CD4-positive, alpha-beta memory T cell (primary cell): ENCODE measurements at regions of chr19 and their contacts with region 1.

Region 1: DNA sequence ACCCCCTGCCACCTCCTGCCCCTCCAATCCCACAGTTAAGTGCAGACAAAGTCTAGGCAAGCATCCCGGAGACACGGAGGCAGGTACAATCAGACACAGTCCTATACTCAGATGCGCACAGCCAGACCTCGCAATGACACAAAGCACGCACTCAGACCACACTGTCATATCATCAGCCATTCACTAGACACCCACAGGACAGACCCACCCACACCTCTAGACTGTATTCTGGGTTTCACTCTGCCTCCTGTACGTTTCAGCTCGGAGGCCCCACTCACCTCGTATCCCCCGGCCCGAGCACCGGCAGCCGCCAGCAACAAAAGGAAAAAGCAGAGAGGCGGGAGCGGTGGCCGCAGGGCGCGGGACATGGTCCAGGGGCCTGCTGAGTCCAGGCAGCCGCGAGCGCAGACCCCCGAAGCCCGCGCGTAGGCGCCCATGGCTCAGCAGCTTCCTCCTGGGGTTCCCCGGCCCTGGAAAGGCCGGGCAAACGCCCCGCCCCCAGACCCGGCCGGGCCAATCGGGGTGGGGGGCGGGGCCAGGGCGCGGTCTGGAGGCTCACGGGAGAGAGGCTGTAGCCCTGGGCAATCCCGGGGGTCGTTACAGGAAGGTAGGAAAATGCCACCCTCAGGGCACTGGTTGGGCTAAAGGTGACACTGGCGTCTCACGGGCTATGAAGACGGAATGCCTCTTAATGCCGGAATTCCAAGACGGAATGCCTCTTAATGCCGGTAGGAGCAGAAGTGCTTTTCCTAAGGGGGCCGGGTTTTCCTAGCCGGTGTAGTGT is at the starts of genes MAN2B1 and WDR83:
- DNase-seq: peak; percentile 73 to 81 (median 78)
- H3K4me3 ChIP-seq: peak within 1 kb of the TSS; percentile 65 to 91
- H3K4me3 Mint-ChIP-seq: peak within 1 kb of the TSS; percentile 91 to 99 (median 94)
- H3K27ac ChIP-seq: peak within 1 kb of the TSS; percentile 98
- H3K27ac Mint-ChIP-seq: peak within 1 kb of the TSS; percentile 90 to 99 (median 97)
- H3K4me1 ChIP-seq: peaks cover 52% of the 10 kb centered on the region
- H3K4me1 Mint-ChIP-seq: peaks cover 24 to 70% (median 46%) of the 10 kb centered on the region in 4 donors
- H3K27me3 ChIP-seq: no peaks in the 10 kb centered on the region
- H3K27me3 Mint-ChIP-seq: no peaks in the 10 kb centered on the region
- total RNA-seq, gene MAN2B1: 137 to 141 TPM
- total RNA-seq, gene WDR83: 18.3 to 19.3 TPM

Region 2: DNA sequence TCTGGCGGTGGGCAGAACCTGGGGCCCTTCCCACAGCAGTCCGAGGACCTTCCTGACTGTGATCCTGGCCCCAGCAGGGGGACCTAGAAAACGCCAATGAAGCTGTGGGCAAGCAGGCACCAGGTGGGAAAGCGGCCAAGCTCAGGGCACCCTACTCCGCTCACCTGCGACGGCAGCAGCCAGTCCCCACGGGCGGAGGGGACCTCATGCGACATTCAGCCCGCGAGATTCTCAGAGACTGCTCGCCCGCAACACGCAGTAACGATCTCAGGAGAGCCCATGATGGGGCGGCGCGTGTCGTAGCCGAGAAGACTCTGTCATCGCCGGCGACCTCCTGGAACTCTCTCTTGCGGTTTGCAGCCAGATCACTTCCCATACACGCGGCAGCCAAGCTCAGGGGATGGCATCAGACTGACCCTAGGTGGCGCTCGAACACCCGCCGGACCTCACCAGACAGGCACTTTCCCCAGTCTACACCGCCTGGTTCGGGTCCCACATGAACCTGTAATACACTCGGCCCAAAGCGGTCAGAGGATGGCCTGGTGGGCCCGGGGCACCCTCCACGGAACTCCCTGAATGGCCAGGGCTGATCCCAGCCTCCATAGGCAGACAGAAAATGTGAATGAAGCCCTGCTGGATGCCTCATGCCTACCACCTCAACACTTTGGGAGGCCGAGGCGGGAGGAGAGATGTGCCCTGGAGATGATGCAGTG is 26.4 kb before region 1 on chr19:
- CTCF ChIA-PET with region 1: interaction called, 17 read pairs
- POLR2A ChIA-PET with region 1: interaction called, 8 read pairs
- intact Hi-C with region 1: loop called (anchors 1 kb)
- DNase-seq: peak; percentile 71 to 82 (median 75)
- H3K4me3 ChIP-seq: no peak overlapping the region
- H3K4me3 Mint-ChIP-seq: peak overlapping the region; percentile 68 to 82 (median 76)
- H3K27ac ChIP-seq: no peak overlapping the region
- H3K27ac Mint-ChIP-seq: peak overlapping the region; percentile 14 to 92 (median 54)
- H3K4me1 ChIP-seq: peaks cover 18% of the 10 kb centered on the region
- H3K4me1 Mint-ChIP-seq: peaks cover 11 to 15% (median 14%) of the 10 kb centered on the region in 4 donors
- H3K27me3 ChIP-seq: no peaks in the 10 kb centered on the region
- H3K27me3 Mint-ChIP-seq: no peaks in the 10 kb centered on the region

Region 3: DNA sequence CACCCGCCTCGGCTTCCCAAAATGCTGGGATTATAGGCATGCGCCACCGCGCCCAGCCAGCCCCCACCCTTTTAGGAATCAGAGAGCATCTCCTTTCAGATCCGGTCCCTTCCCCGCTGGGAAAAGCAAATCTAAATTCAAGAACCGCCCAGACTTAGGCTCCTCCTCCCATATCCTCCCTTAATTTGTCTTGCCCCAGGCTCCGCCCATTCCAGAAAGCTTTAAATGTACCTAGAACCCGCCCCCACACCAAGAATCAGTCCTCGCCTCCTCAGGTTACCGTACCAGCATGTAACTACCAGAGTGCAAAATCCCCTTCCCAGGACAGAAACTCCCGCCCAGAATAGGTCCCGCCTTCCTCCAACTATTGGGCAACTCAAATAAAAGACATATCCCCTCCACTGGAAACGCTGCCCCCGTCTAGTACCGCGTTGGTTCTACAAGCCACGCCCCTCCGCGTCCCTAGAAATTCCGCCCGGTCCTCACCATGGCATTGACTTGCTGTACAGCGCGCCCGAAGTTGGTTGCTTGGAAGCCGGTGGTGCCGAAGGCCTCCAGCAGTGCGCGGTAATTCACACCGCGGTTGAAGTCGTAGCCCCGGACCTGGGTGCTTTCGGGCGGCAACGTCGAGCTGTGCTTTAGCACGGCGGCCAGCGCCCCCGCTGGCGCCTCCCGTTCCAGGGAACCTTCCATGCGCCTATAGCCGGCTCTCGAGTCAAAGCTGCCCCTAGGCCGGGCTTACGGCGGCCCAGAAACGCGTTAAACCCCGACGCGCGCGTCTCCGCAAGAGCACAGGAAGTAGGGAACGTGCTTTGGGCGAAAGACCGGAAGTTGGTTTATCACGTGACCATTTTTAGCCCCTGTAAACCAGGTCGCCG is 14.9 kb after region 1 on chr19 and contains the start of gene DHPS:
- CTCF ChIA-PET with region 1: interaction called, 7 read pairs
- POLR2A ChIA-PET with region 1: interaction called, 35 read pairs
- intact Hi-C with region 1: loop called (anchors 1 kb)
- DNase-seq: peak; percentile 90 to 96 (median 94)
- H3K4me3 ChIP-seq: peak within 1 kb of the TSS; percentile 73 to 98
- H3K4me3 Mint-ChIP-seq: peak within 1 kb of the TSS; percentile 90 to 99 (median 98)
- H3K27ac ChIP-seq: peak within 1 kb of the TSS; percentile 98
- H3K27ac Mint-ChIP-seq: peak within 1 kb of the TSS; percentile 83 to 99 (median 97)
- H3K4me1 ChIP-seq: peaks cover 22% of the 10 kb centered on the region
- H3K4me1 Mint-ChIP-seq: peaks cover 12 to 35% (median 25%) of the 10 kb centered on the region in 4 donors
- H3K27me3 ChIP-seq: no peaks in the 10 kb centered on the region
- H3K27me3 Mint-ChIP-seq: no peaks in the 10 kb centered on the region
- total RNA-seq, gene DHPS: 195 to 197 TPM

Region 4: DNA sequence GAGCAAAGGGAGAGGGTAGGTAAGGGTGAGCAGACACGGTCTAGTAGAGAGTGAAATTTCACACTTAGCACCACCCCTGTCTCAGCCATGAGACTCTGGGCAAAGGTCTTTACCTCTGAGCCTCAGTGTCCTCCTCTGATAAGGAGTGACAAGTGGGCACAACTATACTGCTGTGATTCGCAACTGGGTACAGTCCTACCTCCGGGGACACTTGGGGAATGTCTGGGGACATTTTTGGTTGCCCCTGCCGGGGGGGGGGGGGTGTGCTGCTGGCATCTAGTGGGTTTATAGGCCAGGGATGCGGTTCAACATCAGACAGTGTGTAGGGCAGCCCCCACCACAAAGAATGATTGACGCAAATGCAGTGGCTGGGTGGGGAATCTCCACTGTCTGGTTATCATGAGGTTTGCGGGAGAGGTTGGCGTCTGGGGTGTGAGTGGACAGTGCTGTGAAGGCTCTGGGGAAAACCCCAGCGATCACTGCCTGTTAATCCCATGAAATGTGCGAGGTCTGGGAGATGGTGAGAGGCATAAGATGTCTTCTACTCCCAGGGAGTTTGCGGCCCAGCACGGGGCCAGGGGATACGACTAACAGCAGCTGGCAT is 455.9 kb after region 1 on chr19:
- CTCF ChIA-PET with region 1: no interaction called
- POLR2A ChIA-PET with region 1: no interaction called
- intact Hi-C with region 1: no loop called
- DNase-seq: no peak
- H3K4me3 ChIP-seq: no peak overlapping the region
- H3K4me3 Mint-ChIP-seq: peak overlapping the region in 3 of 8 donors; percentile 6 to 59 (median 42)
- H3K27ac ChIP-seq: no peak overlapping the region
- H3K27ac Mint-ChIP-seq: peak overlapping the region in 5 of 7 donors; percentile 39 to 71 (median 60)
- H3K4me1 ChIP-seq: peaks cover 44% of the 10 kb centered on the region
- H3K4me1 Mint-ChIP-seq: peaks cover 17 to 49% (median 33%) of the 10 kb centered on the region in 4 donors
- H3K27me3 ChIP-seq: no peaks in the 10 kb centered on the region
- H3K27me3 Mint-ChIP-seq: no peaks in the 10 kb centered on the region